SK-N-SH (cell line): ENCODE measurements at regions of chr13 and their contacts with region 1.

Region 1: DNA sequence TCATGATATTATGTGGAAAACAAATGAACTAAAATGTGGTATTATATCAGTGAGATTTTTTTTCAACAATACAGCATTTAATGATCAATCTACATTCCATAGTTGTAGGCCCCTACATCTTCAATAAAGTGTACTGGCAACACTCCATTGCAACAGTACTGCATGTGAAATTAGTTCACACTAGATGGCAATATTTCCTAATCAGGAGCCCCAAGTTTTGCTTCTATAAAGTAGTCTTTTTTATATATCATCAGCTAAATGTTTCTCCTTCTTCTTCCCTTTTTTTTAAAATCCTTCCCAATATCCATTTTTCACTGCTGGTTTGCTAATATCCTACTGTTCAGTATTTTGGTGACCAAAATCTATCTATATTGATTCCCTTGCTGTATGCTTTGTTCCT is 528.3 kb upstream of the ATXN8OS start:
- DNase-seq: peak; percentile 18
- H3K4me3 ChIP-seq: no peak overlapping the region
- H3K27ac ChIP-seq: no peak overlapping the region
- H3K4me1 ChIP-seq: no peaks in the 10 kb centered on the region
- H3K27me3 ChIP-seq: no peaks in the 10 kb centered on the region
- CTCF ChIP-seq: peak; percentile 29
- EP300 ChIP-seq: no peak
- RAD21 ChIP-seq: peak; percentile 73

Region 2: DNA sequence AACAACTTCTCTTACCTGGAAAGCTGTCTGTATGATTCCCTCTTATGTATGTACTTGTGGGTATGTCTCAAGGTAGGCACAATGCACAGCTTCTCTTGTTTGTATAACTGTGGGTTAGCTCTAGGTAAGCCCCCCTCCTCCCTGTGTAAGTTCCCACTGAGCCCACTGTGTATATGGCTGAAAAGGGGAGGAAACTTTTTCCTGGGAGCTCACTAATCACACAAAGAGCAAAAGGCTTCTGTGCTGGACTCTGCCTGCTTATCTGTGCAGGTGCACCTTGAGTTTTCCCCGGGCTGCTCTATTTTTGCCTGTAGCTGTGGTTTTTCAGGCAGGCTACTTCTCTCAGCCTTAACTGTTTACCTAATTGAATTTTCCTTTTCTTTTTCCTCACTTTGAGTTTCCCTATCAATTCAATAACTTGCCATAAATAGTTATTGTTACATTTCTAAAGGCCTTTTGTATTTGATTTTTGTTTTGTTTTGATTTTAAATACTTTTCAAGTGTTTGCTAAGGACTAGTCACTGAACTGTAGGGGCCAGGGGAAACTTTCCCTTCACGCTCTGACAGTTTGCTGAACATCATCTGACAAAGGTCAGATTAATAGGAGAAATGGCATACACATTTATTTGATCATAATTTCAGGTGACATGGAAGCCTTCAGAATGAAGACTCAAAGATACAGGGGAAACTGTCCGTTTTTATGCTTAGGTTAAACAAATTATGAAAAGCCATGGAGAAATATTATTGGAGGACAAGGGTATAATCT is 104.8 kb after region 1 on chr13:
- CTCF ChIA-PET with region 1: no interaction called
- POLR2A ChIA-PET with region 1: no interaction called
- DNase-seq: no peak
- H3K4me3 ChIP-seq: no peak overlapping the region
- H3K27ac ChIP-seq: no peak overlapping the region
- H3K4me1 ChIP-seq: no peaks in the 10 kb centered on the region; a peak in 1 of 4 replicates
- H3K27me3 ChIP-seq: no peaks in the 10 kb centered on the region
- CTCF ChIP-seq: no peak
- EP300 ChIP-seq: no peak
- RAD21 ChIP-seq: no peak

Region 3: DNA sequence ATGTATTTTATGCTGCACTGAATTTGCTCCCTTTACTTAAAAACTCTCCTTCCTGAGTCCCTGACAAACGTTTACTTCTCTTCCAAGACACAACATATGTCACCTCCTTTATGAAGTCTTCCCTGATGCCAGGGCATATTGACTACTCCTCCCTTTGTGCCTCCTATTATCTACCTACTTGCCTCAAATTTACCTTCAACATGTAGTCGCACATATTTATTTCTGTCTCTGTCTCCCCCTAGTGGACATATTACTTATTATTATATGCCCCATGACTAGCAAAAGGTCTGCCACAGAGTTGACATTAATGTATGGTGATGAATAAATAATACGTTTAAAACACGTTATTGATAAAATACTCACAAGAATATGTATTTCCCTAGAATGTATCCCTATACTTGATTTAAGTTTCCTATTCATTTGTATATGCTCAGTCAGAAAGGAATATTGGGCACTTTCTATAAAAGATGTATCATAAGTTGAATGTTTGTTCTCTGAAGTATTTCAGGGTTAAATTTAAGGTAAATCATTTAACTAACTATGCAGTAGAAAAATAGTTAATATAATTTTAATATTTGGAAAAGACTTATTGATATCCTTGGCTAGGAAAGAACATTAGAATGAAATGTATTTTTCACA is 278.0 kb after region 1 on chr13:
- CTCF ChIA-PET with region 1: interaction called, 14 read pairs
- POLR2A ChIA-PET with region 1: no interaction called
- DNase-seq: peak; percentile 7
- H3K4me3 ChIP-seq: no peak overlapping the region
- H3K27ac ChIP-seq: no peak overlapping the region
- H3K4me1 ChIP-seq: no peaks in the 10 kb centered on the region; a peak in 1 of 4 replicates
- H3K27me3 ChIP-seq: no peaks in the 10 kb centered on the region
- CTCF ChIP-seq: peak; percentile 85
- EP300 ChIP-seq: no peak
- RAD21 ChIP-seq: peak; percentile 85